ENCODE measurements at regions of chr19 and their contacts with region 1.

Region 1: DNA sequence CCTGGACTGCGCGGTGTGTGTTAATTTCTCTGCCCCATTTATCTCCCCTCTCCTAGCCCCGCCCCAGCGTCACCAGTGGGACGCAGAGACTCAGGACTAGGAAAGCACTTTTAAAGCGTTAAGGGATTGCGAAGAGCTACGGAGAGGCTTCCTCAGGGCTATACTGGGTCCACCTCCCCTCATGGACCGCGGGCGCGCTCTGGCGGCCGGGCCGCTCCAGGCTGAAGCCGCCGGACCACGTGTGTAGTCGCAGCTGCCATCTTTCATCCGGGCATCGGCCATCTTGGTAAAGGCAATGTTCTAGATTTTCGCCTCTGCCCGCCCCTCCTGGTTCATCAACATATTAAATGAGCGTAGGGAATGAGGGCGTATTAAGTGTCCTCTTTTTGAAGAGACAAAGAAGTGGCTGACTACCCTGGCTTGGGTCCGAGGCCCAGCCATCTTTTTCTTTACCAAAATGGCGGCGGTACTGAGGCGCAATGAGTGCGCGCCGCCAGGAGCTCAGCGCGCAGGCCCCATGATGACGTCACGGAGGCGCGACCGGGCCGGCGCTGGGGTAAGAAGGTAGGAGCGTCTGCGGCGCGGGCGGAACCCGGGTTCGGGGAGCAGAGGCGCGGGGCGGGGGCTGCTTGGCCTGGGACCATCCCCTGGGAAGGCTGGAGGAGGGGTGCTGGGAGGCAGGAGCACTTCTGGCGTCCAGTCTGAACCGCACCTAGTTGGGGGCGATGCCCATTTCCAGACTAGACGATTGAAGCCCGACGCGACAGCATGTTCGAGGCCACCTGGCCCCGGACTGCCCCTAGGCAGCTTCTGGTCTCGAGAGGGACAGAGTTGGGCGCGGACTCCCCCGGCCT is at the start of gene CCDC124:
- DNase-seq: peak; percentile 60
- H3K4me3 ChIP-seq: peak within 1 kb of the TSS; percentile 80 to 98 (median 88)
- H3K27ac ChIP-seq: peak within 1 kb of the TSS; percentile 85 to 95 (median 92)
- H3K4me1 ChIP-seq: peaks cover 20 to 27% (median 20%) of the 10 kb centered on the region in 3 donors
- H3K27me3 ChIP-seq: no peaks in the 10 kb centered on the region
- CTCF ChIP-seq: peak; percentile 84 to 98 (median 94)
- POLR2A ChIP-seq: peak in 3 of 4 donors; percentile 89 to 91 (median 90)
- total RNA-seq, gene CCDC124: 50.2 to 80.6 (median 54.5) TPM

Region 2: GRCh38 chr19:17865364-17866311 is 67.1 kb before region 1 on chr19:
- intact Hi-C with region 1: loop called (anchors 5 kb)
- DNase-seq: no peak
- H3K4me3 ChIP-seq: no peak overlapping the region
- H3K27ac ChIP-seq: peak overlapping the region; percentile 35 to 65 (median 57)
- H3K4me1 ChIP-seq: peaks cover 26 to 56% (median 45%) of the 10 kb centered on the region in 3 donors
- H3K27me3 ChIP-seq: peaks cover 0 to 18% (median 5%) of the 10 kb centered on the region in 4 donors
- CTCF ChIP-seq: no peak
- POLR2A ChIP-seq: peak in 1 of 4 donors; percentile 9

Region 3: DNA sequence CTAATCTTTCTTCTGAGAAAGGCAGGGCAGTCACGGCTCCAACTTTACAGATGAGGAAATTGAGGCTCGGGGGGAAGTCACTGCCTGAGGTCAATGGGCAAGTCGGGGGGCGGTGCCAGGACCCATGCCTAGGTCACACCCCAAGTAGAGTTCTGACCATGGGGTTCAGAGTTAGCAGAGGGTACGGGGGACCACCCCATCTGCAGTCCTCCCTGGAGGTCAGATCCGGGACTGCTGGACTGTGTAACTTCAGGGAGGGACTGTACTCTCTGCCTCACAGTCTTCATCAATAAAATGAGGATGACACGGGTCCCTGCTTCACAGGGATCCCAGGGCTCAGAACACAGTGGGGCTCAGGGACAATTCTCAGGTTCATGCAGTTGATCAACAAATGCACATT is 53.2 kb before region 1 on chr19:
- intact Hi-C with region 1: no loop called
- DNase-seq: no peak
- H3K4me3 ChIP-seq: no peak overlapping the region
- H3K27ac ChIP-seq: no peak overlapping the region
- H3K4me1 ChIP-seq: no peaks in the 10 kb centered on the region
- H3K27me3 ChIP-seq: peaks cover 0 to 45% (median 0%) of the 10 kb centered on the region in 4 donors
- CTCF ChIP-seq: no peak
- POLR2A ChIP-seq: no peak

Region 4: DNA sequence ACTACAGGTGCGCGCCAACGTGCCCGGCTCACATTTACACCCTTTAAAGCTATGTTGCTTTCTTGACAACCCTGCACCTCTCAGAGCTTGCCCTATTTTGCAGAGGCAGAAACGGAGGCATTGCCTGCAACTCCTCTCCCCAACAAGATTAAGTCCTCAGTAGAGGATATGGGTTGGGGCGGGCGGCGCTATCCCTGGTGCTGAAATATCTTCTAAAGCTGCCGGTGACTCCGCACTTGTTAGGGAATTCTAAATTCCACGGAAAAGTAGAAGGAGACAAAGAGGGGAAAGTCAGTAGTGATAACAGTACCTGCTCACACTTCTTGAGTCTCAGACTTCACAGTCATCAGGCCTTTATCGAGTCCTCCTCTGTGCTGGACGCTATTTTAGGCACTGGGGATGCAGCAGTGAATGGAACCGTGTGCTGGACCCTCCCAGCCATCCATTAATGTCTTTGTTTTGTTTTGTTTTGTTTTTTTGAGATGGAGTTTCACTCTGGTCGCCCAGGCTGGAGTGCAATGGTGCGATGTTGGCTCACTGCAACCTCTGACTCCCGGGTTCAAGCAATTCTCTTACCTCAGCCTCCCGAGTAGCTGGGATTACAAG is 43.0 kb before region 1 on chr19:
- intact Hi-C with region 1: no loop called
- DNase-seq: no peak
- H3K4me3 ChIP-seq: no peak overlapping the region
- H3K27ac ChIP-seq: no peak overlapping the region
- H3K4me1 ChIP-seq: no peaks in the 10 kb centered on the region
- H3K27me3 ChIP-seq: peaks cover 0 to 66% (median 0%) of the 10 kb centered on the region in 4 donors
- CTCF ChIP-seq: no peak
- POLR2A ChIP-seq: no peak